ENCODE measurements at regions of chr6 and their contacts with region 1.

Region 1: GRCh38 chr6:100479179-100480035 is 14.7 kb upstream of the SIM1 start:
- DNase-seq: no peak
- ATAC-seq: peak; percentile 55 to 79 (median 74)
- H3K4me3 ChIP-seq: no peak overlapping the region
- H3K27ac ChIP-seq: no peak overlapping the region
- H3K4me1 ChIP-seq: no peaks in the 10 kb centered on the region
- H3K27me3 ChIP-seq: no peaks in the 10 kb centered on the region
- CTCF ChIP-seq: peak; percentile 25 to 67 (median 60)

Region 2: DNA sequence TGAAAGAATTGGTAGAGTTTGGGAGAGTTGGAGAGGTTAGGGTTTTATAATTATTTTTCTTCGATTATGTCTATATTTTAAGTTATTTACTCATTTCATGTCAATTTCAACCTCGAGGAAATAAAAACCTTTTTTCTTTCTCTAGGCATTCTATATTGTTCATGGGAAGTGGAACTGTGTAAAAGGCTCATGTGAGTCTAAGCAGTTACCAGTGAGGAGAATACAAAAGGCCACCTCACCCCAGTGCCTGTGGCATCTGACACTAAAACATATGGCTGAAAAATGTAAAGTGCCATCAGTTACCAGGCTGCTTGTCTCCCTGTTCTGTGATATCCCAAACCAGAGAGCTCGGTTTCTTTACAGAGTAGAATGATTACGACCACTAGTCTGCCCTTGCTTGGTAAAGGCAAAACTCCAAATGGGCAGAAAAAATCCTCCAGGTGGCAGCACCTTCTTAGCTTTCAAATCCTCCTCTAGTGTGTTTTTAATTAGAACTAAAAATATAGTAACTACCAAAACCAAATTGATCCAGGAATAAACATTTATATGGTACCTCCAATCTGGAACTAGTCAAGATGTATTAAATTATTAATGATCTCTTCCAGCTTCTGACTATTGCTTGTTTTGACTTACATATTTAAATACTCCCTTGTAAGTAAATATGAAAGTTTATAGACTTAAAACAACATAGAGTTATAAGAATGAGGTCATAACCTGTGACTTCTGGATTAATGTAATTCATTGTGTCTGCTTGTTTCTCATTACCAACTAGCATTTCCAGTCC is 362.8 kb before region 1 on chr6:
- intact Hi-C with region 1: loop called in 2 of 3 experiments (anchors 5 to 10 kb)
- DNase-seq: peak in 2 of 6 donors; percentile 14 to 51
- ATAC-seq: peak; percentile 61 to 84 (median 74)
- H3K4me3 ChIP-seq: no peak overlapping the region
- H3K27ac ChIP-seq: no peak overlapping the region
- H3K4me1 ChIP-seq: no peaks in the 10 kb centered on the region
- H3K27me3 ChIP-seq: no peaks in the 10 kb centered on the region
- CTCF ChIP-seq: peak; percentile 21 to 60 (median 50)

Region 3: DNA sequence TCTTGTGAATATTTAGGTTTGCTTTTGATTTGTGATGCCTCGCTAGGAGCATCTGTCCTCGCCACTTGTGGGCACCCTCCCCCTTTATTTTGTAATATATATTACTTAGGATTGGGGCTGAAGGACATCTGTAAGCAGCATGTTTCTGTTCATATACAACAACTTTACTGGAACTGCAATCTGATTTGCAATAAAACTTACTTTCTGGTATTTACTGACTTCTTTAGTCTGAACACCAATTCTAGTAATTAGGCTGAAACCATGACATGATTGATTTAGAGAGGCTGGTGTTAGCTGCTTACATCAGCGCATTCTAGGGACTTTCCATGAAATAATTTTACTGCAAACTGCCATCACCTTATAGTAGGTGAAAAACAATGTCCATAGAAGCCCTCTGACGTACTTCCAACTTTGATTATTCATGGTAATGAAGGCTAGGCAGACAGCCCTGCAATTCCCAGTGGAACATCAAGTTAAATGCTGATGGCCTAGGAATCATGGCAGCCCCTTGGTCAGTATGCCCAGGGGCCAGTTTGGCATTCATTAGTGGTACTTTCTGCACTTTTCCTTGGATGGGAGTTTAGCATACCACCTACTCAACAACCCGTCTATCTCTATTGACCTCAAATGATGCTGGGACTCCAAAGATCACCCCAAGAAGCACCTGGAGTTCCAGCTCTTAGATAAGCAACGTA is 352.5 kb before region 1 on chr6:
- intact Hi-C with region 1: loop called in 1 of 3 experiments (anchors 10 kb)
- DNase-seq: no peak
- ATAC-seq: no peak
- H3K4me3 ChIP-seq: no peak overlapping the region
- H3K27ac ChIP-seq: no peak overlapping the region
- H3K4me1 ChIP-seq: no peaks in the 10 kb centered on the region
- H3K27me3 ChIP-seq: no peaks in the 10 kb centered on the region
- CTCF ChIP-seq: no peak

Region 4: GRCh38 chr6:100426241-100426640 is 53.2 kb before region 1 on chr6:
- intact Hi-C with region 1: no loop called
- DNase-seq: no peak
- ATAC-seq: no peak
- H3K4me3 ChIP-seq: peak overlapping the region in 1 of 4 donors; percentile 17
- H3K27ac ChIP-seq: no peak overlapping the region
- H3K4me1 ChIP-seq: peaks cover 0 to 6% (median 0%) of the 10 kb centered on the region in 3 donors
- H3K27me3 ChIP-seq: peaks cover 0 to 4% (median 0%) of the 10 kb centered on the region in 4 donors
- CTCF ChIP-seq: no peak